Panc1 (cell line): ENCODE measurements at regions of chr2 and their contacts with region 1.

Region 1: DNA sequence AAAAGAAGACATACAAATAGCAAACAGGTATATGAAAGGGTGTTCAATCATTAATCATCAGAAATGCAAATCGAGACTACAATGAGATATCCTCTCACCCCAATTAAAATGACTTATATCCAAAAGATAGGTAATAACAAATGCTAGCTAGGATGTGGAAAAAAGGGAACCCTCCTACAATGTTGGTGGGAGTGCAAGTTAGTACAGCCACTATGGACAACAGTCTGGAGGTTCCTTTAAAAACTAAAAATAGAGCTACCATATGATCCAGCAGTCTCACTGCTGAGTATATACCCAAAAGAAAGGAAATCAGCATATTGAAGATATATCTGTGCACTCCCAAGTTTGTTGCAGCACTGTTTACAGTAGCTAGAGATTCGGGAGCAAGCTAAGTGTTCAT is 271.5 kb downstream of the MBD5 start:
- DNase-seq: no peak
- ATAC-seq: no peak
- H3K4me3 ChIP-seq: no peak overlapping the region
- H3K27ac ChIP-seq: no peak overlapping the region
- H3K4me1 ChIP-seq: no peaks in the 10 kb centered on the region
- H3K27me3 ChIP-seq: no peaks in the 10 kb centered on the region
- CTCF ChIP-seq: no peak

Region 2: DNA sequence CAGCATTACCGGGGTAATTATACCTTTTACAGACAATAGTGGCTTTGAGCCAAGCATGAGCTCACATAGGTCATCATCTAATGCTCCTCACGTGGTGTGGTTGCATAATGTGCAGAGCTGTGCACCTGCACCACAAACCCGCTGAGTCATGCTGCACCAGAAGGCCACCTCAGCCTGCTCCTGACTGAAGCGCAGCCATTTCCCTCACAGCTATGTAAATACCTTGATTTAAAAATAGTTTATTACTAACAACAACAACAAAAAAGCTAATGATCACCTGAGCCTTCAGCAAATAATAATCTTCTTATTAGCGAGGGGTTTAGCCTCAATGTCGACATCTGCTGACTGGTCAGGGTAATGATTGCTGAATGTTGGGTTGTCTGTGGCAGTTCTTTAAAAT is 32.8 kb before region 1 on chr2:
- CTCF ChIA-PET with region 1: no interaction called
- POLR2A ChIA-PET with region 1: no interaction called
- in situ Hi-C with region 1: no loop called
- intact Hi-C with region 1: no loop called
- DNase-seq: no peak
- ATAC-seq: no peak
- H3K4me3 ChIP-seq: no peak overlapping the region
- H3K27ac ChIP-seq: no peak overlapping the region
- H3K4me1 ChIP-seq: no peaks in the 10 kb centered on the region
- H3K27me3 ChIP-seq: no peaks in the 10 kb centered on the region
- CTCF ChIP-seq: no peak

Region 3: GRCh38 chr2:149178612-149179011 is 886.2 kb after region 1 on chr2:
- CTCF ChIA-PET with region 1: no interaction called
- POLR2A ChIA-PET with region 1: interaction called, 16 read pairs
- in situ Hi-C with region 1: no loop called
- intact Hi-C with region 1: no loop called
- DNase-seq: no peak
- ATAC-seq: no peak
- H3K4me3 ChIP-seq: no peak overlapping the region
- H3K27ac ChIP-seq: no peak overlapping the region
- H3K4me1 ChIP-seq: no peaks in the 10 kb centered on the region
- H3K27me3 ChIP-seq: no peaks in the 10 kb centered on the region
- CTCF ChIP-seq: no peak